ENCODE measurements at regions of chr11 and their contacts with region 1.

Region 1: DNA sequence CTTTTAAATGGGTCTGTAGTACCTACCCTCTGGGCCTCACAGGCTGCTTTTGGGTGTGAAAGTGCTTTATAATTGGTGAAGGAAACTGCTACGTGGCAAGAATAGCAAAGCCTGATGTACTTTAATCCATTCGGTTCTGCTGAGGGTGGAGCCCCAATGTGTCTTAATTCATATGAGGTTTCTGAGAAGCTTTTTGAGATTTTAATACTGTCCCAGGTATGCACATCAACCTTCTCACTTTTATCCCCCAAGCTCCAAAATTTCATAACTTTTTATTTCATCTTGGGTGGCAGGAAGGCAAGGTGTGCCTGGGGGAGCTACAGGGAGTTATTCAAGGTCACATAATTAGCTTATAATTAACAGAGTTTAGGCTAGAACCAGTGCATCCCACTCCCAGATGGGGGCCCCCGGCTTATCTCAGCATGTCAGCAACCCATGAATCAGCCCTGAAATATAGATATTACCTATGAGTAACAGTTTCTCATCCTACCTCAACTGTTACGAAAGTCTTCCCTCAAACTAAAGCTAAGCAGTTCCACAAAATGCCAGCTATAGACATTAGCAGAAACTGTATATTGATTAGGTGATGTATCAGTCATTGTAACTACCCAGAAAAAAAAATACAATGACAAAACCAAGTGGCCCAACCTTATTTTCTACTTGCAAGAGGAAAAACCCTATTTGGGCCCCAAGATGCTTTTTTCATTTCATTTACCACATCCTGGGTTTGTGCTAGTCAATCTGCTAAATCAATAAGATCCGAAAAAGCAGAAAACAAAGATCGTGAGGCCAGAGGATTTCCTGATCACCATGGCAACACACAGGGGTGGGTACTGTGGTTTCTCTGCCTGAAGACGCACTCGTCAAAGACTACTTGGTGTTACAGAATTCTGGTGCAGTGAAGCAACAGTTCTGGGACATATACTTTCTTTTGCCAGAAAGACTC is 26.7 kb downstream of the CD44 start:
- DNase-seq: peak; percentile 96 to 98 (median 98)
- H3K4me3 ChIP-seq: peak overlapping the region; percentile 36 to 37
- H3K4me3 Mint-ChIP-seq: peak overlapping the region; percentile 77 to 87 (median 84)
- H3K27ac ChIP-seq: peak overlapping the region; percentile 96
- H3K27ac Mint-ChIP-seq: peak overlapping the region; percentile 93 to 100 (median 100)
- H3K4me1 ChIP-seq: peaks cover 98% of the 10 kb centered on the region
- H3K4me1 Mint-ChIP-seq: peaks cover 85 to 100% (median 94%) of the 10 kb centered on the region in 4 donors
- H3K27me3 ChIP-seq: no peaks in the 10 kb centered on the region
- H3K27me3 Mint-ChIP-seq: no peaks in the 10 kb centered on the region

Region 2: GRCh38 chr11:34997952-34998528 is 167.7 kb before region 1 on chr11:
- CTCF ChIA-PET with region 1: interaction called, 45 read pairs
- POLR2A ChIA-PET with region 1: interaction called, 47 read pairs
- intact Hi-C with region 1: loop called (anchors 1 kb)
- DNase-seq: peak in 4 of 5 donors; percentile 37 to 48 (median 44)
- H3K4me3 ChIP-seq: no peak overlapping the region
- H3K4me3 Mint-ChIP-seq: peak overlapping the region in 6 of 8 donors; percentile 62 to 78 (median 75)
- H3K27ac ChIP-seq: peak overlapping the region; percentile 45
- H3K27ac Mint-ChIP-seq: peak overlapping the region; percentile 57 to 95 (median 86)
- H3K4me1 ChIP-seq: peaks cover 24% of the 10 kb centered on the region
- H3K4me1 Mint-ChIP-seq: peaks cover 20 to 34% (median 24%) of the 10 kb centered on the region in 4 donors
- H3K27me3 ChIP-seq: no peaks in the 10 kb centered on the region
- H3K27me3 Mint-ChIP-seq: no peaks in the 10 kb centered on the region

Region 3: DNA sequence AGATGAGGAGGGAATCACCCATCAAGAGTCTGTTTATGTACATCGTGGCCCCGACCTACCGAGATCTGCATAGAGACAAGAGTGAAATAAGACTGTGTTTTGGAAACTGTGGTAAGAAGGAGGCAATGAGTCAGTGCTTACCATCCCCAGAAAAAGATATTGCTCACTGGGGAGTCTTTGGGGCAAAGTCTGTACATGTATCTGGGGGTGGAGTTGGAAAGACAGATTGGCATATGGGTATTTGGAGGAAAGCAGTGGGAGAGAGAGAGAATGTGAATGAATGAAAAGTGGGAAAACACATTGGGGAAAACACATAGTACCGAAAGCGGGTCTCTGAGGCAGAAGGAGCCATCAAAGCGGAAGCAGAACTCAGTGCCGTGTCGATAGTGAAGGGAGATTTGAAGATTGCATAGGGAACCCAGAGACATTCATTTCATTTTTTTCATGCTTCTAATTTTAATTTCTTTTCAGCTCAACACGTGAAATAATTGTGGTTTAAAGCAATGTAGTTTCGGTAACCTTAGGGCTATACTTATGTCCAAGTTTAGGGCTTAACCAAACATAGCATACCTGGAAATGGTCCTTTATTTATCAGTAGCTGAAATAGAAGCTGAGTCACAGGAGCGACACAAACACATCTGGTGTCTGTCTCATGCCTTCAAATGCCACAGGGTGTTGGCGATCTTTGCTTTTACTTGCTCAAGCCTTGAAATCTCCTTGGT is 125.3 kb before region 1 on chr11:
- CTCF ChIA-PET with region 1: interaction called, 10 read pairs
- POLR2A ChIA-PET with region 1: interaction called, 87 read pairs
- intact Hi-C with region 1: loop called (anchors 1 kb)
- DNase-seq: peak; percentile 78 to 93 (median 84)
- H3K4me3 ChIP-seq: peak overlapping the region; percentile 31 to 62
- H3K4me3 Mint-ChIP-seq: peak overlapping the region; percentile 80 to 93 (median 88)
- H3K27ac ChIP-seq: peak overlapping the region; percentile 94
- H3K27ac Mint-ChIP-seq: peak overlapping the region; percentile 96 to 99 (median 98)
- H3K4me1 ChIP-seq: peaks cover 68% of the 10 kb centered on the region
- H3K4me1 Mint-ChIP-seq: peaks cover 38 to 69% (median 54%) of the 10 kb centered on the region in 4 donors
- H3K27me3 ChIP-seq: no peaks in the 10 kb centered on the region
- H3K27me3 Mint-ChIP-seq: no peaks in the 10 kb centered on the region

Region 4: GRCh38 chr11:35138943-35139721 is 26.6 kb before region 1 on chr11 and contains the start of gene CD44:
- CTCF ChIA-PET with region 1: interaction called, 151 read pairs
- POLR2A ChIA-PET with region 1: interaction called, 1,106 read pairs
- intact Hi-C with region 1: loop called (anchors 1 kb)
- DNase-seq: peak; percentile 78 to 93 (median 83)
- H3K4me3 ChIP-seq: peak within 1 kb of the TSS; percentile 84 to 99
- H3K4me3 Mint-ChIP-seq: peak within 1 kb of the TSS; percentile 95 to 99 (median 98)
- H3K27ac ChIP-seq: peak within 1 kb of the TSS; percentile 98
- H3K27ac Mint-ChIP-seq: peak within 1 kb of the TSS; percentile 93 to 99 (median 98)
- H3K4me1 ChIP-seq: peaks cover 42% of the 10 kb centered on the region
- H3K4me1 Mint-ChIP-seq: peaks cover 36 to 64% (median 44%) of the 10 kb centered on the region in 4 donors
- H3K27me3 ChIP-seq: no peaks in the 10 kb centered on the region
- H3K27me3 Mint-ChIP-seq: no peaks in the 10 kb centered on the region
- total RNA-seq, gene CD44: 808 to 809 TPM

Region 5: DNA sequence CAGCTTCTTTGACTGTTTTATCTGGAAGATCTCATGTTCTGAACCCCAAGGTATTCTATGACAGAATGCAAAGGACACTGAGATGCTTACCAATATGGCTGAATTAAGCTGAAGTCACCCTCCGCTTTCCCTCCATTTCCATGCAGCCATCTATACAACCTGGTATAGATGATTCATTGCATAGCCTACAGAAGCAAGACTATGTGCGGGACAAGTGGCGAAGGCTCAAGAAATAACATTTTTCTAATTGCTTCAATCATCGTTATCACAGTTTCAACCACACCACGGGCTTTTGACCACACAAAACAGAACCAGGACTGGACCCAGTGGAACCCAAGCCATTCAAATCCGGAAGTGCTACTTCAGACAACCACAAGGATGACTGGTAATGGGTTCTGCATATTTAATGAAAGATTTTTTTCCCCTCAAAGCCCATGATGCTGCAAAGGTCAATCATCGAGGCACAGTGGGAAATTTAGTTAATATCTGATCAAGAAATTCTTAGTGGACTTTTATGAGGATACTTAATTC is 35.2 kb after region 1 on chr11:
- CTCF ChIA-PET with region 1: no interaction called
- POLR2A ChIA-PET with region 1: interaction called, 15 read pairs
- intact Hi-C with region 1: no loop called
- DNase-seq: no peak
- H3K4me3 ChIP-seq: no peak overlapping the region
- H3K4me3 Mint-ChIP-seq: no peak overlapping the region
- H3K27ac ChIP-seq: no peak overlapping the region
- H3K27ac Mint-ChIP-seq: peak overlapping the region in 4 of 7 donors; percentile 17 to 77 (median 34)
- H3K4me1 ChIP-seq: peaks cover 46% of the 10 kb centered on the region
- H3K4me1 Mint-ChIP-seq: peaks cover 45 to 89% (median 69%) of the 10 kb centered on the region in 4 donors
- H3K27me3 ChIP-seq: no peaks in the 10 kb centered on the region
- H3K27me3 Mint-ChIP-seq: no peaks in the 10 kb centered on the region

Region 6: GRCh38 chr11:35246745-35247144 is 81.0 kb after region 1 on chr11:
- CTCF ChIA-PET with region 1: interaction called, 5 read pairs
- POLR2A ChIA-PET with region 1: interaction called, 13 read pairs
- intact Hi-C with region 1: no loop called
- DNase-seq: no peak
- H3K4me3 ChIP-seq: no peak overlapping the region
- H3K4me3 Mint-ChIP-seq: peak overlapping the region in 5 of 8 donors; percentile 18 to 77 (median 67)
- H3K27ac ChIP-seq: peak overlapping the region; percentile 47
- H3K27ac Mint-ChIP-seq: peak overlapping the region; percentile 95 to 99 (median 98)
- H3K4me1 ChIP-seq: peaks cover 72% of the 10 kb centered on the region
- H3K4me1 Mint-ChIP-seq: peaks cover 47 to 78% (median 62%) of the 10 kb centered on the region in 4 donors
- H3K27me3 ChIP-seq: no peaks in the 10 kb centered on the region
- H3K27me3 Mint-ChIP-seq: no peaks in the 10 kb centered on the region

Region 7: DNA sequence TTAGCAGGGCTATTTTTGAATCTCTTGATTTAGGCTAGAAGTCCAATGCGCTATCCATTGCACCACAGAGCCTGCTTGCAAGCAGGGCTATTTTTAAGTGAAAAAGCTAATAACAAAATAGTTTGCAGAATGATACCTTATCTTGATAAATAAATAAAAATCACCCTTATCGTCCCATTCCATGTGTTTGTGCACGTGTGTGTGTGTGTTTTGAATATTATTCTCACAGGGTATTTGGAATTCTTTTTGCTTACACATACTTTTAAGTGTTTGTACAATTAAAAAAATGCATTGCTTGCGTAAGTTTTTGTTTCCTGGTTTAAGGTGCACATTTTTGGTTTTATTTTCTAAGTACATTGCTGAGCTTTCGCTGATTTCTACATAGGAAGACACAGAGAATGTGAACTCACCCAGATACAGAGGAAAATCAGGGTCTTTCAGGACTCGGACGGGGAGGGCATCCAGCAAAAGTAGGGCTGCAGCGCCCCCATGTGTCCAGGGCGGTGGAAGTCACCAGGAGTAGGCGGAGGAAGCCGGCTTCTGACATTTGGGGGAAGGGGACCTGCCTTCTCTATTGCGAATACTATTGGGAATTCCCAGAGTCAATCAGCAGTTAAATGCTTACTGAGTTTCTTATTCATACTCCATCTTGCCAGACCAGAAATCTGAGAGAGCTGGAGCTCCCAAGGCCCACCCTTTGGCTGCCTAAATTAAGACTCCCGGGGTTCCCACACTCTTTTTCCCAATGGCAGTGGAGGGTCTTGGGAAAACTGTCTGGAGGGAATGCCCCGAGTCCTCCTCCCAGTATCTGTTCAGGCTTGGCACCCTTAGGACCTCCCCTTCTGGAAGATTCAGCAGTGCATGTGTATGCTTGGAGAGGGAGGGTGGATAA is 226.5 kb after region 1 on chr11:
- CTCF ChIA-PET with region 1: interaction called, 3 read pairs
- POLR2A ChIA-PET with region 1: interaction called, 10 read pairs
- intact Hi-C with region 1: loop called (anchors 5 kb)
- DNase-seq: peak; percentile 74 to 82 (median 78)
- H3K4me3 ChIP-seq: peak overlapping the region in 1 of 2 donors; percentile 16
- H3K4me3 Mint-ChIP-seq: peak overlapping the region; percentile 22 to 79 (median 64)
- H3K27ac ChIP-seq: no peak overlapping the region
- H3K27ac Mint-ChIP-seq: peak overlapping the region in 5 of 7 donors; percentile 5 to 74 (median 47)
- H3K4me1 ChIP-seq: peaks cover 19% of the 10 kb centered on the region
- H3K4me1 Mint-ChIP-seq: peaks cover 13 to 27% (median 19%) of the 10 kb centered on the region in 4 donors
- H3K27me3 ChIP-seq: no peaks in the 10 kb centered on the region
- H3K27me3 Mint-ChIP-seq: no peaks in the 10 kb centered on the region

Region 8: GRCh38 chr11:35478471-35479091 is 312.9 kb after region 1 on chr11:
- CTCF ChIA-PET with region 1: no interaction called
- POLR2A ChIA-PET with region 1: no interaction called
- intact Hi-C with region 1: no loop called
- DNase-seq: no peak
- H3K4me3 ChIP-seq: no peak overlapping the region
- H3K4me3 Mint-ChIP-seq: no peak overlapping the region
- H3K27ac ChIP-seq: no peak overlapping the region
- H3K27ac Mint-ChIP-seq: no peak overlapping the region
- H3K4me1 ChIP-seq: no peaks in the 10 kb centered on the region
- H3K4me1 Mint-ChIP-seq: peaks cover 0 to 5% (median under 1%) of the 10 kb centered on the region in 4 donors
- H3K27me3 ChIP-seq: no peaks in the 10 kb centered on the region
- H3K27me3 Mint-ChIP-seq: peaks cover 31 to 43% of the 10 kb centered on the region in 2 donors